AG04449 (cell line): ENCODE measurements at regions of chr10 and their contacts with region 1.

Region 1: DNA sequence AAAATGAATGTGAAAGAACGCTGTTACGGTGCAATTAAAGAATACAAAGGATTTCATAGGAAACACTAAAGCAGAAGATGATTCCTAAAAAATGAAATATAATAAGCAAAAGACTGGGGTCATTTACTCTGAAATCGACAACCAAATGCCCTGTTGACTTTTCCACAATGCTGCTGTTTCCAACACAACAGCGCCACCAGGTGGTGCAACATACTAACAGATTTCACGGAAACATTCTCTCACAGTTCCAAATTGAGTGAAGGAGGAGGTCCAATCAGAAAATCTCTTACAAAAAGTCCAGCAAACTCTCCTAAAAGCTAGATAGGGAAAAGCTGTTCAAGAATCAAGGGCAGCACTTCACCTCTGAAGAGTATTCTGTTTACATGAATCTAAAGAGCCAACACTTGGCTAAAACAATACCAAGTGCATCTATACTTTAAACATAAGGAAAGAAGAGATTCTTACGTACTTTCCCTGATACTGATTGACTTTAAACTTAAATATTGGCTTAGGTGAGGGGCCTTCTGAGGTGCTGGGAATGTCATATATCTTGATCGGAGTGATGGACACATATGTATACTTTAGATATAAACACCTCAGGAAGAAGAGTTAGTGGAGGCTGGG is 55.9 kb downstream of the UPF2 start:
- DNase-seq: peak; percentile 40
- H3K4me3 ChIP-seq: no peak overlapping the region
- CTCF ChIP-seq: peak; percentile 79

Region 2: DNA sequence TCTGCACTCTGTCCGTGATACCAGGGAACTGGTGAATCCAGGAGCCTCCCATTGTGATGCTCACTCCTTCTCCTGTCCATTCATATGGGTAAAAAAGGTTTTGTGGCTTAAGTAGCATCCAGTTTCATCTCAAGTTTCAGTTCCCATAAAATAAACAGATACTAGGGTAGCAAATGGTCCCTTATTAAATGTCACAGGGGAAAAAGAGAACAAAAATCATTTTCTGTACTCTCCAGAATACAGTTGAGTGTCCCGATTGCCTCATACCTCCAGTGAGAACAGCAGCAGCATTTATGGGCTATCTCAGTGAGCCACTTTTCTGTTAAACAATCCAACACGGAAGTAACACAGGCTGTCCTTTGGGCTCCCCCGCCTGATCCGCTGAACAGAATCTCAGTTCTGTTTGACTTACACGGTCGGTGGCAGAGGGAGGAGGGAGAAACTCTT is 789.4 kb before region 1 on chr10:
- CTCF ChIA-PET with region 1: no interaction called
- POLR2A ChIA-PET with region 1: no interaction called
- DNase-seq: no peak
- H3K4me3 ChIP-seq: no peak overlapping the region
- CTCF ChIP-seq: no peak

Region 3: DNA sequence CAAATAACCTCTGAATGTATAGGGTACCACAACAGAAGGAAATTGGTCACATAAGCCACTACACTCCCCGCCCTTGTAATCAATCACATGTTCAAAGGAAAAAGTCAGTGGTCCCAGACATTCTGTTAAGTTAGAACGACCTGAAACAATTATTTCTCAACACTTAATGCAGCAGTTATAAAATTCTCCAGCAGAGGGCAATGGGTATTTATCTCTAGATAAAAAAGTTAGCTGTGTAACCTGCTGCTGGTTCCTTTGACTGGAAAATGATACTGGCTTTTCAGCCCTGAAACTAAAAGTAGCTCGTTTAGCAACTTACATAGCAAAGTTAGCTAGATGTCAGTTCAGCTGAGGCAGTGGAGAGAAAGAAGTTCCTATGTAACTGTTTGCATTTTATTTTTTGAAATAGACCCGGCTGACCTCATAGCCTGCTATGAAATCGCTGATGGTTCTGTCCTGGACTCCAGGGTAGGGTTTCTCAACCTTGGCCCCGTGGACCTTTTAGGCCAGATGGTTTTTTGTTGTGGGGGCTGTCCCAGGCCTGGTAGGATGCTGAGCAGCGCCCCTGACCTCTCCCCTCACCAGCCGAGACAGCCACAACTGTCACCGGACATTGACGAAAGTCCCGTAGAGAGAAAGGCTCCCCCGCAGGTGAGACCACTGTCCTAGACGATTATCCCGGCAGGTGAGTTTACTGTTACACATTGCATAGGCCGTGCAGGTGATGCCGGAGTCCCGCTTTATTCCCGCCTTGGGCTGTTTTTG is 203.7 kb before region 1 on chr10:
- CTCF ChIA-PET with region 1: interaction called, 94 read pairs
- POLR2A ChIA-PET with region 1: no interaction called
- DNase-seq: no peak
- H3K4me3 ChIP-seq: no peak overlapping the region
- CTCF ChIP-seq: peak; percentile 39

Region 4: GRCh38 chr10:11951695-11952094 is 35.0 kb before region 1 on chr10:
- CTCF ChIA-PET with region 1: interaction called, 10 read pairs
- POLR2A ChIA-PET with region 1: no interaction called
- DNase-seq: no peak
- H3K4me3 ChIP-seq: no peak overlapping the region
- CTCF ChIP-seq: no peak

Region 5: DNA sequence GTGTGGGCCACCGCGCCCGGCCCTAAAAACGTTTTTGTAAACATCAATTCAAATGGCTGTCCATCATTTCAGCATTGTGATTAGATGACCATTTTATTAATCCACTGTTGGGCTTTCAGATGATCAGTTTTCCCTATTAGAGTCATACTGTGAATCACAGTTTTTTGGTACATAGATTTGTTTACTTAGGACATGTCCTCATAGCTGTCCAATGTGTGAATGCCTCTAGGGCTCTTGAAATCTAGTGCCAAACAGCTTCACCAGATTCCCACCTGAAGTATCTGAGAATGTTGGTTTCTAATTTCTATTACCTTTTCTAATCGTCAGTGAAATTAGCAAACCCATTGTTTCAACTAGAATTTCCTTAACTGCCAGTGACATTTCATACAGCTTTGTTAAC is 10.9 kb before region 1 on chr10:
- CTCF ChIA-PET with region 1: interaction called, 18 read pairs
- POLR2A ChIA-PET with region 1: no interaction called
- DNase-seq: no peak
- H3K4me3 ChIP-seq: no peak overlapping the region
- CTCF ChIP-seq: no peak

Region 6: GRCh38 chr10:12027539-12027938 is 40.8 kb after region 1 on chr10:
- CTCF ChIA-PET with region 1: interaction called, 12 read pairs
- POLR2A ChIA-PET with region 1: no interaction called
- DNase-seq: no peak
- H3K4me3 ChIP-seq: no peak overlapping the region
- CTCF ChIP-seq: no peak